Dorsolateral prefrontal cortex (tissue), 120 donors: ENCODE measurements at regions of chr2 and their contacts with region 1.

Region 1: DNA sequence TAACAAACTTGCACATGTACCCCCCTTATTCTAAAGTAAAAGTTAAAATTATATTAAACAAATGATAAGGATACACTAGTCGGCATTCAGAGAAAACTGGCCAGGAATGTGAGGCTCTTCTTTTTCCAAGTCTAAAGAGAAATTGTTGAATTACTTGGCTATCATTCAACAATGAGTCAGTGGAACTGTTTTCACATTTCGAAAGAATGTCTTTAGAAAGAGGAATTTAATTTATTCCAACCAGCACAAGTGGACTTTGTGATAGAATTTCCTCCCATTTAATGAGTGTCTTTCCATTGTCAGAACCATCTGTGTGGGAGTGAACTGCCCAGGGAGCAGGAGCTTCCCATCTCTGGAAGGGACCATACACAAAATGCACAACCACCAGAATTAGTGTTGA is 792.2 kb downstream of the EPHA4 start:
- DNase-seq: no peak
- H3K4me3 ChIP-seq: peak overlapping the region in 4 of 59 donors; percentile 1 to 24 (median 7)
- H3K27ac ChIP-seq: peak overlapping the region in 1 of 59 donors; percentile 8
- H3K27me3 ChIP-seq: no peaks in the 10 kb centered on the region
- CTCF ChIP-seq: no peak

Region 2: GRCh38 chr2:220687231-220687843 is 92.6 kb before region 1 on chr2:
- intact Hi-C with region 1: loop called in 1 of 2 experiments (anchors 5 kb)
- DNase-seq: peak; percentile 40 to 75 (median 70)
- H3K4me3 ChIP-seq: no peak overlapping the region
- H3K27ac ChIP-seq: no peak overlapping the region
- H3K27me3 ChIP-seq: peaks cover 0 to 4% (median 0%) of the 10 kb centered on the region in 45 donors
- CTCF ChIP-seq: peak; percentile 60 to 96 (median 88)